ENCODE measurements at regions of chr6 and their contacts with region 1.

Region 1: GRCh38 chr6:125099211-125100073 is 54.1 kb upstream of the TPD52L1 start:
- DNase-seq: peak; percentile 66
- ATAC-seq: peak; percentile 87

Region 2: GRCh38 chr6:124961777-124962611 is 137.4 kb before region 1 on chr6 and contains the start of gene RNF217:
- intact Hi-C with region 1: loop called (anchors 10 kb)
- DNase-seq: peak; percentile 85
- ATAC-seq: peak; percentile 88
- total RNA-seq, gene RNF217: 43.5 TPM

Region 3: GRCh38 chr6:125140808-125141207 is 41.4 kb after region 1 on chr6:
- intact Hi-C with region 1: no loop called
- DNase-seq: no peak
- ATAC-seq: no peak

Measured in sciatic nerve (tissue), 2 donors.